ENCODE measurements at regions of chr17 and their contacts with region 1.

Region 1: DNA sequence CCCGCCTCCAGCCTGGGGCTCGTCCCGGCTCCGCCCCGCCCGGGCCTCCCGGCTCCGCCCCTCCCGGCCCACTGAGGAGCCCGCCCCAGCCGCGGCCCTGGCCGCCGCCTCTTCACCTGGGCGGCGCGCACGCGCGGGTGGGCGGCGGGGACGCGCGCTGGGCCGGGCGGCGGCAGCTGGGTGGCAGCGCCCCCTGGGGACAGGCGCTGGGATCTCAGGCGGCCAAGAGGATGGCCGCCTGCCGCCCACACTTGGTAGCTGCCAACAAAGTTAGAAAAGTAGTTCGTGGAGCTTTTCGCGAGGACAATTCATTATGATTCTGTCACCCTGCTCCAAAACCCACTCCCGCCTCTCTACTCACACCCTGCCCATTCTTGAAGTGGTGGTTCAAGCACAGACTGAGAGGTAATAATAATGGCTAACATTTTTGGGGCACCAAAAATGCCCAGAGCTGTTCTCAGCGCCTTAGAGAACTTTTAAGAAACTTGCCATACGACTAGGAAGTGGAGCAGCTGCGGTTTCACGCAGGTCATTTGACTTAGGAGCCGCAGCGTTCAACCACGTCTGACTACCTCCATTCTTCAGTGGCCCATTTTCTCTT is 340 bp upstream of the MYO1D start:
- DNase-seq: peak; percentile 90 to 95 (median 93)
- H3K4me3 ChIP-seq: peak overlapping the region; percentile 47
- H3K4me3 Mint-ChIP-seq: peak overlapping the region; percentile 84 to 92 (median 86)
- H3K27ac ChIP-seq: peak overlapping the region; percentile 72
- H3K27ac Mint-ChIP-seq: peak overlapping the region; percentile 40 to 96 (median 90)
- H3K4me1 ChIP-seq: peaks cover 18% of the 10 kb centered on the region
- H3K4me1 Mint-ChIP-seq: peaks cover 10 to 16% (median 13%) of the 10 kb centered on the region in 3 donors
- H3K27me3 ChIP-seq: no peaks in the 10 kb centered on the region
- H3K27me3 Mint-ChIP-seq: peaks cover 3 to 6% of the 10 kb centered on the region in 2 donors

Region 2: GRCh38 chr17:32742681-32743538 is 134.4 kb before region 1 on chr17:
- CTCF ChIA-PET with region 1: no interaction called
- POLR2A ChIA-PET with region 1: no interaction called
- DNase-seq: no peak
- H3K4me3 ChIP-seq: no peak overlapping the region
- H3K4me3 Mint-ChIP-seq: no peak overlapping the region
- H3K27ac ChIP-seq: no peak overlapping the region
- H3K27ac Mint-ChIP-seq: peak overlapping the region in 1 of 8 donors; percentile 16
- H3K4me1 ChIP-seq: no peaks in the 10 kb centered on the region
- H3K4me1 Mint-ChIP-seq: no peaks in the 10 kb centered on the region
- H3K27me3 ChIP-seq: no peaks in the 10 kb centered on the region
- H3K27me3 Mint-ChIP-seq: no peaks in the 10 kb centered on the region

Region 3: GRCh38 chr17:32783602-32784001 is 93.7 kb before region 1 on chr17:
- CTCF ChIA-PET with region 1: interaction called, 74 read pairs
- POLR2A ChIA-PET with region 1: no interaction called
- DNase-seq: peak in 2 of 5 donors; percentile 40 to 45
- H3K4me3 ChIP-seq: no peak overlapping the region
- H3K4me3 Mint-ChIP-seq: no peak overlapping the region
- H3K27ac ChIP-seq: no peak overlapping the region
- H3K27ac Mint-ChIP-seq: no peak overlapping the region
- H3K4me1 ChIP-seq: no peaks in the 10 kb centered on the region
- H3K4me1 Mint-ChIP-seq: no peaks in the 10 kb centered on the region
- H3K27me3 ChIP-seq: no peaks in the 10 kb centered on the region
- H3K27me3 Mint-ChIP-seq: no peaks in the 10 kb centered on the region

Region 4: GRCh38 chr17:32862940-32863339 is 14.3 kb before region 1 on chr17:
- CTCF ChIA-PET with region 1: interaction called, 21 read pairs
- POLR2A ChIA-PET with region 1: no interaction called
- DNase-seq: no peak
- H3K4me3 ChIP-seq: no peak overlapping the region
- H3K4me3 Mint-ChIP-seq: no peak overlapping the region
- H3K27ac ChIP-seq: no peak overlapping the region
- H3K27ac Mint-ChIP-seq: no peak overlapping the region
- H3K4me1 ChIP-seq: no peaks in the 10 kb centered on the region
- H3K4me1 Mint-ChIP-seq: no peaks in the 10 kb centered on the region
- H3K27me3 ChIP-seq: no peaks in the 10 kb centered on the region
- H3K27me3 Mint-ChIP-seq: peaks cover 0 to 6% of the 10 kb centered on the region in 2 donors

Region 5: DNA sequence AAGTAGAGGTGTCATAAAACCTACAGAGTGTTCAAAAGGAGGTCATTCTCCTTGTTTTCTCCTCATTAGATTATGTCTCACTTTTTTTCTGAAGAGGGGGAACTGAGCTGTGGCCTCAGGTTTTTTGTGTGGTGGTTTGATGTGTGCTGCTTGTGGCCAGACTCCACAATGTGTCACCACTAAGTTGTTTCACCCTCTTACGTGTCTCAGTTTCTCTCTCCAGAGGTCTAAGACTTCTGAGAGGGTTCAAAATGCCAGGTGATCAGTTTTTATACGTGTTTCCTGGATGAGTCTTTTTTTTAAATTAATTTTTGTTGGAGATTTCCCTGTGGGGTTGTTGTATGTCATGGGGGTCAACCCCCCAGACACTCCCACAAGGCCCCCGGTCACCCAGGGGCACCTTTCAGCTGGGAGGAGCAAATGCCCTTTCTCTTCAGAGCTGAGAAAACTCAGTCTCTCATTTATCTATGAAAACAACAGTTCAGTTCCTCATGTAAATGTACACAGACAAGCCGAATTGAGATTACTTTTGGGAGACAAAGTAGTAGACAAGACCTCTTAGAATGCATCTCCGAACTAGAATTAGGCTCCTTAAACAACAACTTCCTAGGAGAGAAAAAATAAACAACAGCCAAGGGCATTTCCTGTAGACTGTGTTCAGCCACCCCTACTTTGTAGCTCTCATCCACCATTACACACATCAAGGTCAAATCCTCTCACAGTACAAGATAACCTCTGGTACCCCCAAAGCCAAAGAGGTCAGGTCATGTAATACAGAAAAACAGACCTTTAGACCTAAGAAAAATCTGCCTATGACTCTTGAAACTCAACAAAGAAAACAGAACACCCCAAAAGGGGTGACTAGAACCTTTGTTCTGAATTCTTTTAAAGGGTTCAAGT is 26.8 kb after region 1 on chr17:
- CTCF ChIA-PET with region 1: interaction called, 22 read pairs
- POLR2A ChIA-PET with region 1: interaction called, 3 read pairs
- DNase-seq: no peak
- H3K4me3 ChIP-seq: no peak overlapping the region
- H3K4me3 Mint-ChIP-seq: peak overlapping the region in 1 of 7 donors; percentile 16
- H3K27ac ChIP-seq: peak overlapping the region; percentile 3
- H3K27ac Mint-ChIP-seq: peak overlapping the region in 5 of 8 donors; percentile 18 to 78 (median 52)
- H3K4me1 ChIP-seq: no peaks in the 10 kb centered on the region
- H3K4me1 Mint-ChIP-seq: peaks cover 4 to 13% (median 12%) of the 10 kb centered on the region in 3 donors
- H3K27me3 ChIP-seq: no peaks in the 10 kb centered on the region
- H3K27me3 Mint-ChIP-seq: peaks cover 7 to 36% of the 10 kb centered on the region in 2 donors

Region 6: GRCh38 chr17:32909787-32910369 is 32.6 kb after region 1 on chr17:
- CTCF ChIA-PET with region 1: interaction called, 22 read pairs
- POLR2A ChIA-PET with region 1: interaction called, 3 read pairs
- DNase-seq: peak; percentile 6 to 59 (median 23)
- H3K4me3 ChIP-seq: no peak overlapping the region
- H3K4me3 Mint-ChIP-seq: no peak overlapping the region
- H3K27ac ChIP-seq: no peak overlapping the region
- H3K27ac Mint-ChIP-seq: peak overlapping the region in 2 of 8 donors; percentile 3 to 22
- H3K4me1 ChIP-seq: no peaks in the 10 kb centered on the region
- H3K4me1 Mint-ChIP-seq: peaks cover 0 to 5% (median 4%) of the 10 kb centered on the region in 3 donors
- H3K27me3 ChIP-seq: no peaks in the 10 kb centered on the region
- H3K27me3 Mint-ChIP-seq: peaks cover 4 to 17% of the 10 kb centered on the region in 2 donors

Region 7: GRCh38 chr17:32936894-32937500 is 59.7 kb after region 1 on chr17:
- CTCF ChIA-PET with region 1: interaction called, 16 read pairs
- POLR2A ChIA-PET with region 1: no interaction called
- DNase-seq: peak; percentile 32 to 68 (median 39)
- H3K4me3 ChIP-seq: no peak overlapping the region
- H3K4me3 Mint-ChIP-seq: peak overlapping the region in 4 of 7 donors; percentile 9 to 63 (median 46)
- H3K27ac ChIP-seq: no peak overlapping the region
- H3K27ac Mint-ChIP-seq: no peak overlapping the region
- H3K4me1 ChIP-seq: no peaks in the 10 kb centered on the region
- H3K4me1 Mint-ChIP-seq: peaks cover 0 to 6% (median 4%) of the 10 kb centered on the region in 3 donors
- H3K27me3 ChIP-seq: no peaks in the 10 kb centered on the region
- H3K27me3 Mint-ChIP-seq: peaks cover 7 to 50% of the 10 kb centered on the region in 2 donors

Region 8: GRCh38 chr17:32947736-32948135 is 70.5 kb after region 1 on chr17:
- CTCF ChIA-PET with region 1: no interaction called
- POLR2A ChIA-PET with region 1: no interaction called
- DNase-seq: no peak
- H3K4me3 ChIP-seq: no peak overlapping the region
- H3K4me3 Mint-ChIP-seq: no peak overlapping the region
- H3K27ac ChIP-seq: no peak overlapping the region
- H3K27ac Mint-ChIP-seq: no peak overlapping the region
- H3K4me1 ChIP-seq: no peaks in the 10 kb centered on the region
- H3K4me1 Mint-ChIP-seq: no peaks in the 10 kb centered on the region
- H3K27me3 ChIP-seq: no peaks in the 10 kb centered on the region
- H3K27me3 Mint-ChIP-seq: peaks cover 7 to 25% of the 10 kb centered on the region in 2 donors